Activated CD4-positive, alpha-beta T cell treated with anti-CD3 and anti-CD28 coated beads, Interleukin-2, amount 10 ng/mL, durations not matched to agents 24 days and 14 days (primary cell): ENCODE measurements at regions of chr5 and their contacts with region 1.

Region 1: DNA sequence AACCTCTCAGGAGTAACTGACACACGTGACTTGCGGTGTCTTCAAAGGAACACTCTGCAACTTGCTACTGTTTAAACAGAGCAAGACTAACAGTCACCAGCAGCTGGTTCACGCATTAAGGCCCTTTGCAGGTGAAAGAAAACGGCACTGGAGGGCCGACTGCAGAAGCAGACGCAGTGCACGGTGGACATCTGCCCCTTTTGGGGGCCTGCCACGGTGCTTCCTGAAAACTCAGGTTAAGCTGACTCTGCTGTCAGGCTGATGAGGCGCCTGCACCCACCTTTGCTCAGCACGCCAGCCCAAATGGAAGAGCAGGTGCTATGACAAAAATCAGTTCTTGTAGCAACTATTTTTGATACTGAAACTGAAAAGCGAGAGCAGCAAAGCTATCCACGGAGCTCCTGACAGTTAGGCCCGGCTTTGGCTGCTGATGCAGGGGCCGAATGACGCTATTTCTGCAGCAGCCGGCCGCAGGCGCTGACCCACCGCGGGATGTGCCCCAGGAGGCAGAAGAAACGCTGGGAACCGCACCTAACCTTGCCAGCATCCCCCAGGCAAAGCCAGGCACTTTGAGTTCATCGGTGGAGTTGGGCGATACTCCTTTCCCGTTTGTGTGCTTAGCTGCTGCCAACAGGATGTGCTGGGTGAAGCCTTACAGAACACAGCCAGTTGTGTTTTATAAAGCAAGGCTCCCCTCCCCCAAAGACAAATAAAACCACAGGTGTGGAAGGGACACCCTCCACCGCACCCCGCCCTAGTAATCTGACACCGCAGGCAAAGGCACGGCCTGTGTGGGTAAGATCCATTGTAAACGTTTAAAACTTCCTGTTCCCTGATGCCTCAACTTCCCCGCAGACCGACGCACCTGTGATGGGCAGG is 21.1 kb upstream of the TERT start:
- DNase-seq: peak; percentile 90
- H3K4me3 Mint-ChIP-seq: peak overlapping the region; percentile 74
- H3K27ac Mint-ChIP-seq: peak overlapping the region; percentile 85
- H3K4me1 Mint-ChIP-seq: peaks cover 57% of the 10 kb centered on the region
- H3K27me3 Mint-ChIP-seq: no peaks in the 10 kb centered on the region

Region 2: GRCh38 chr5:1111727-1112289 is 204.1 kb before region 1 on chr5 and contains the start of gene SLC12A7:
- intact Hi-C with region 1: loop called (anchors 10 kb)
- DNase-seq: peak; percentile 93
- H3K4me3 Mint-ChIP-seq: peak within 1 kb of the TSS; percentile 91
- H3K27ac Mint-ChIP-seq: peak within 1 kb of the TSS; percentile 88
- H3K4me1 Mint-ChIP-seq: peaks cover 30% of the 10 kb centered on the region
- H3K27me3 Mint-ChIP-seq: peaks cover 2% of the 10 kb centered on the region
- total RNA-seq, gene SLC12A7: 32.1 and 33.4 TPM in 2 replicates

Region 3: DNA sequence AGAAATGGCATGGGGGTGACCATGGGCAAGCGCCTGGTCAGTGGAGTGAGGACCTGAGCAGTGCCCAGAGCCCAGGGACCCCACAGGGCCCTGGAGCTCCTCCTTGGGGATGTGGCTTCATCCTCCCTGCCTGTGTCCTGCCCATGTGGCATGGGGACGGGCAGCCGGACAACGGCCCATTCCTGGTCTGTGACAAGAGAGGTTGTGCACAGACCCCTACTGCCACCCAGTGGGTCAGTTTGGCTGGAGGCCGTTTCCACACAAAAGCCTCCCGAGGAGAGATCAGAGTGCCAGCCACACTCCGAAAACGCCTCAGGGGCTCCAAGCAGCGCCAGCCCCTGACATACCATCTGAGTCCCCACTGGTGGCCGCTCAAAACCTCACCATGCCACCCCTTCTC is 71.0 kb before region 1 on chr5:
- intact Hi-C with region 1: no loop called
- DNase-seq: no peak
- H3K4me3 Mint-ChIP-seq: no peak overlapping the region
- H3K27ac Mint-ChIP-seq: no peak overlapping the region
- H3K4me1 Mint-ChIP-seq: no peaks in the 10 kb centered on the region
- H3K27me3 Mint-ChIP-seq: peaks cover 6% of the 10 kb centered on the region

Region 4: DNA sequence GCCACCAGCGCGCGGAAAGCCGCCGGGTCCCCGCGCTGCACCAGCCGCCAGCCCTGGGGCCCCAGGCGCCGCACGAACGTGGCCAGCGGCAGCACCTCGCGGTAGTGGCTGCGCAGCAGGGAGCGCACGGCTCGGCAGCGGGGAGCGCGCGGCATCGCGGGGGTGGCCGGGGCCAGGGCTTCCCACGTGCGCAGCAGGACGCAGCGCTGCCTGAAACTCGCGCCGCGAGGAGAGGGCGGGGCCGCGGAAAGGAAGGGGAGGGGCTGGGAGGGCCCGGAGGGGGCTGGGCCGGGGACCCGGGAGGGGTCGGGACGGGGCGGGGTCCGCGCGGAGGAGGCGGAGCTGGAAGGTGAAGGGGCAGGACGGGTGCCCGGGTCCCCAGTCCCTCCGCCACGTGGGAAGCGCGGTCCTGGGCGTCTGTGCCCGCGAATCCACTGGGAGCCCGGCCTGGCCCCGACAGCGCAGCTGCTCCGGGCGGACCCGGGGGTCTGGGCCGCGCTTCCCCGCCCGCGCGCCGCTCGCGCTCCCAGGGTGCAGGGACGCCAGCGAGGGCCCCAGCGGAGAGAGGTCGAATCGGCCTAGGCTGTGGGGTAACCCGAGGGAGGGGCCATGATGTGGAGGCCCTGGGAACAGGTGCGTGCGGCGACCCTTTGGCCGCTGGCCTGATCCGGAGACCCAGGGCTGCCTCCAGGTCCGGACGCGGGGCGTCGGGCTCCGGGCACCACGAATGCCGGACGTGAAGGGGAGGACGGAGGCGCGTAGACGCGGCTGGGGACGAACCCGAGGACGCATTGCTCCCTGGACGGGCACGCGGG is 20.9 kb before region 1 on chr5 and contains the start of gene TERT:
- intact Hi-C with region 1: loop called (anchors 1 kb)
- DNase-seq: peak; percentile 91
- H3K4me3 Mint-ChIP-seq: peak within 1 kb of the TSS; percentile 60
- H3K27ac Mint-ChIP-seq: no peak within 1 kb of the TSS
- H3K4me1 Mint-ChIP-seq: peaks cover 2% of the 10 kb centered on the region
- H3K27me3 Mint-ChIP-seq: peaks cover 6% of the 10 kb centered on the region
- total RNA-seq, gene TERT: 10.1 and 16.8 TPM in 2 replicates

Region 5: GRCh38 chr5:1325870-1326532 is 10.1 kb after region 1 on chr5:
- intact Hi-C with region 1: no loop called
- DNase-seq: no peak
- H3K4me3 Mint-ChIP-seq: no peak overlapping the region
- H3K27ac Mint-ChIP-seq: peak overlapping the region; percentile 17
- H3K4me1 Mint-ChIP-seq: peaks cover 9% of the 10 kb centered on the region
- H3K27me3 Mint-ChIP-seq: no peaks in the 10 kb centered on the region

Region 6: DNA sequence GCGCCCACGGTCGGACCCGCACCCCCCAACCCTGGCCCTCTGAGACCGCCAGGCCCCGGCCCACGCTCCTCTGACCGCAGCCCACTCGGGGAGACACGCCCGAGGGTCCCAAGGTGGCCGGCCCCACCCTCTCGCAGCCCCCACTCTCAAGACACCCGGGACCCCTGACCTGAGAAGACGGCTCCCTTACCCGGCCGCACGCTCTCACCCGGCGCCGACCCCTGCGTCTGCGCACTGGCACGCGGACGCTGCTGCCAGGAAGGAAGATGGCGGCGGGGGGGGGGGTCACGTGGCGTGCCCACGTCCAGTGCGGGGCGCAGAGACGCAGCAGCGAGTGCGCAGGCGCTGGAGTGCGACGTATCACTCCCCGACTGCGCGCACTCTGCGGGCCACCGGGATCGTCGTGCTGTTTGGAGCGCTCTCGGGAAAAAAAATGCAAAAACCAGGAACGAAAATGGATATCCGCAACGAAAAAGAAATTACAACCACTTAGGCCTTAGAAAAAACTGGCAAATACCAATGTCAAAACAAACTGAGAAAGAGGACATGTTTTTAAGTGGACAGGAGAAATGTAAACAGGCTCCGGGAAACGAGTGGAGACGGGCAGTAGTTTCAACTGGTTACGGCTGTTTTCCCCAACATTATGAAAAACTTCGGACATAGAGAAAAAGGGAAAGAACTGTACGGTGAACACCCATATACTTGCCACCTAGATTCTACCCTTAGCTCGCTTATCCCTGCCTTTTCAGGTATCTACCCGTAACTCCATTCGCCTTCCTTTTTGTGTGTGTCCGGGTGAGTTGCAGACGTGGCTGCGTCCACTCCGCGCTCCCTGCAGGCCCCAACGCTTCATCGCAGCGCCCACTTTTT is 483.9 kb after region 1 on chr5 and contains the start of gene MRPL36:
- intact Hi-C with region 1: loop called (anchors 10 kb)
- DNase-seq: peak; percentile 97
- H3K4me3 Mint-ChIP-seq: peak within 1 kb of the TSS; percentile 90
- H3K27ac Mint-ChIP-seq: peak within 1 kb of the TSS; percentile 93
- H3K4me1 Mint-ChIP-seq: peaks cover 49% of the 10 kb centered on the region
- H3K27me3 Mint-ChIP-seq: no peaks in the 10 kb centered on the region
- total RNA-seq, gene MRPL36: 107 and 108 TPM in 2 replicates